ENCODE measurements at regions of chr1 and their contacts with region 1.

Region 1: DNA sequence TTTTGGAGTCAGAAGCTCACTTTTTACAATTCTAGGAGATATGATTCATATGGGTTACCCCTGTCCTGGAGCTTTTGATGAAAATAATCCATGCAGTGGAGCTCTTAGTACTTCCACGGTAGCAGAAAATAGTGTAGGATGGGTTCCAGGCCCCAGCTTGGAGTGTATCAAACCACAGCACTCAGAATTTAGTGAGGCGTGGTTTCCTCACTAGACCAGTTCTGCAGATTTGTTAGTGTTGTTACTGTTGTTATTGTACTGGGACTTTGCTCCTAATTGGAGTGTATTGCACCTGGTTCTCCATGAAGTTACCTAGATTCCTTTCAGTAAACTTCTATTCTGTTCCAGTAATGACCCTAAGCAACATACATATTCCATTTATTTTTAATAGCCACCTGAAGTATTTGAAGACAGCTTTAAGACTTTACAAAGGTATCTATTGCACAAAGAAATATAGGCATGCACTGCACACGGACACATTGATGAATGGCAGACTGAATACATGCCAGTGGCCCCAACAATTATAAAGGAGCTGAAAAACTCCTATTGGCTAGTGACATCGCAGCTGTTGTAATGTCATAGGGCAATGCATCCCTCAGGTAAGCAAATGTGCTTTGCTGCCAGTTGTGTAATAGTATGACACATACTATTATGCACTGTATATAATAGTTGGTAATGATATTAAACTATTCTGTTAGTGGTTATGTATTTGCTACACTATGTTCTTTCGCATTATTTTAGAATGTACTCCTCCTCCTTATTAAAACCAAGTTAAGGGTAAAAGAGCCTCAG is 1058.0 kb downstream of the KCNT2 start:
- DNase-seq: peak; percentile 48
- H3K4me3 ChIP-seq: no peak overlapping the region
- H3K27ac ChIP-seq: peak overlapping the region; percentile 31 to 55 (median 44)
- H3K4me1 ChIP-seq: peaks cover 0 to 16% (median 2%) of the 10 kb centered on the region in 4 donors
- H3K27me3 ChIP-seq: no peaks in the 10 kb centered on the region
- CTCF ChIP-seq: no peak
- EP300 ChIP-seq: no peak
- POLR2A ChIP-seq: no peak

Region 2: GRCh38 chr1:194908643-194909042 is 641.6 kb before region 1 on chr1:
- in situ Hi-C with region 1: no loop called
- intact Hi-C with region 1: loop called (anchors 5 kb)
- DNase-seq: no peak
- H3K4me3 ChIP-seq: no peak overlapping the region
- H3K27ac ChIP-seq: no peak overlapping the region
- H3K4me1 ChIP-seq: no peaks in the 10 kb centered on the region
- H3K27me3 ChIP-seq: no peaks in the 10 kb centered on the region
- CTCF ChIP-seq: no peak
- EP300 ChIP-seq: no peak
- POLR2A ChIP-seq: no peak

Measured in transverse colon (tissue), 4 donors.